ENCODE measurements at regions of chr1 and their contacts with region 1.

Region 1: GRCh38 chr1:11337580-11338073 is 64.6 kb downstream of the UBIAD1 start:
- DNase-seq: no peak

Region 2: GRCh38 chr1:10032590-10033358 is 1304.9 kb before region 1 on chr1 and contains the start of gene UBE4B:
- intact Hi-C with region 1: no loop called
- DNase-seq: peak; percentile 100
- total RNA-seq, gene UBE4B: 34.4 to 34.7 TPM

Region 3: GRCh38 chr1:11272832-11273594 is 64.6 kb before region 1 on chr1 and contains the start of gene UBIAD1:
- intact Hi-C with region 1: loop called in 1 of 2 experiments (anchors 2 kb)
- DNase-seq: peak; percentile 95
- total RNA-seq, gene UBIAD1: 8.0 to 12.0 TPM

Region 4: GRCh38 chr1:11377001-11377583 is 39.5 kb after region 1 on chr1:
- intact Hi-C with region 1: loop called in 1 of 2 experiments (anchors 1 kb)
- DNase-seq: no peak